PC-9 (cell line): ENCODE measurements at regions of chr3 and their contacts with region 1.

Region 1: DNA sequence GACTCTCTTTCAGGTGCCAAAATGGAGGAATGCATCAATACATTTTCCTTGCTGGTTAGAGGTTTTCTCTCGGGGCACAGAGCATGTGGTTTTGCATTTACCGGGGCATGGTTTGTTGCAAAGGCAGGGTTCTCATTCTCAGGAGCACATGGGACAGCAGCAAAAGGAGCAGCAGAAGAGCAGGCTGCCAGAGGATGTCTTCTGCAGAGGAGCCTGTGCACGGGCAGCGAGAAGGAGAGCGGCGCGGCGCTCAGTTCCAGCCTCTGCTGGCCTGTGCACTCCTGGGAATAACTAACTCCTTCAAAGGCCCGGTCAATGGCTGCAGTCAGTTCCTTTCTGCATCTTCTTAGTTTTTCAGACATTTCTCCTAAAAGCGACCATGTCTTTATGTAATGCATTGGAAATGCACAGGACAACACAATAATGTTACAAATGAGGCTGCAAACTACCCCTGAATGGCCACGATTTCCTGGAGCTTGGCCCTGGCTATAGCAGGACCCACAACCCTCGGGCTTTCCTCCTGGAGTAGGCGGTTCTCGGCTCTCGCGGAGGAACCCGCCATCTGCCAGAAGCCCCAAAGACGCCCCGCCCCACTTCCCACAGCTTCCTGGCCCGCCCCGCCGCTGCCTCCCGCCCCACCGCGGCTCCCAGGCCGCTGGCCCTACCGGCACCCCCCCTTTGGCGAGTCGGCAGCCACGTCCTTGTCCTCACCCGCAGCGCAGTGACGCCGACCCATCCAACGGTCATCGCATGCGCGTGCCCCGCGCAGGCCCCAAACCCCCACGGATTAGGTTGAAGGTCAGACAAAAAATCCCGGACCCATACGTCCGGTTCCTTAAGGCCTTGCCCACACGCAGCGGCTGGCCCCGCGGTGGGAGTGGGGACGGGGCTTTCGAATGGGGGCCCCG is at the start of gene C3orf62:
- DNase-seq: no peak
- H3K4me3 ChIP-seq: no peak within 1 kb of the TSS
- H3K27ac ChIP-seq: no peak within 1 kb of the TSS
- H3K4me1 ChIP-seq: no peaks in the 10 kb centered on the region
- H3K27me3 ChIP-seq: no peaks in the 10 kb centered on the region
- CTCF ChIP-seq: no peak
- total RNA-seq, gene C3orf62: 6.9 and 12.4 TPM in 2 replicates

Region 2: DNA sequence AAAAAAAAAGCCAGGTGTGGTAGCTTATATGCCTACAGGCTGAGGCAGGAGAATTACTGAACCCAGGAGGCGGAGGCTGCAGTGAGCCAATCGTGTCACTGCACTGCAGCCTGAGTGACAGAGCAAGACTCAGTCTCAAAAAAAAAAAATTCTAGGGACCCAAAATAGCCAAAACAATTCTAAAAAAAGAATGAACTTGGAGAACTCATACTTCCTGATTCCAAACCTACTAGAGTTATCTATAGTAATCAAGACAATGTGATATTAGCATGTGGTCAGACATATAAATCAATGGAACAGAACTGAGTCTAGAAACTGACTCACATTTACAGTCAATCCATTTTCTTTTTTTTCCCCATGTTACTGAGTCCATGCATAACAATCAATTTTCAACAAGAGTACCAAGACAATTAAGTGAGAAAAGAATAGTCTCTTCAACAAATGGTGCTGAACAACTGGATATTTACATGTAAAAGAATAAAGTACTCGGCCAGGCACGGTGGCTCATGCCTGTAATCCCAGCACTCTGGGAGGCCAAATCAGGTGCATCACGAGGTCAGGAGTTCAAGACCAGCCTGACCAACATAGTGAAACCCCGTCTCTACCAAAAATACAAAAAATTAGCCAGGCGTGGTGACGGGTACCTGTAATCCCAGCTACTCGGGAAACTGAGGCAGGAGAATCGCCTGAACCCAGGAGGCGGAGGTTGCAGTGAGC is 440.9 kb before region 1 on chr3:
- CTCF ChIA-PET with region 1: no interaction called
- POLR2A ChIA-PET with region 1: interaction called, 17 read pairs
- intact Hi-C with region 1: no loop called
- DNase-seq: no peak
- H3K4me3 ChIP-seq: no peak overlapping the region
- H3K27ac ChIP-seq: no peak overlapping the region
- H3K4me1 ChIP-seq: no peaks in the 10 kb centered on the region
- H3K27me3 ChIP-seq: no peaks in the 10 kb centered on the region
- CTCF ChIP-seq: no peak